Psoas muscle (tissue), 8 donors: ENCODE measurements at regions of chr7 and their contacts with region 1.

Region 1: GRCh38 chr7:159056737-159057136 is 87.9 kb downstream of the VIPR2 start:
- DNase-seq: no peak
- ATAC-seq: no peak
- H3K4me3 ChIP-seq: no peak overlapping the region
- H3K27ac ChIP-seq: no peak overlapping the region
- H3K4me1 ChIP-seq: no peaks in the 10 kb centered on the region
- H3K27me3 ChIP-seq: no peaks in the 10 kb centered on the region
- CTCF ChIP-seq: no peak

Region 2: DNA sequence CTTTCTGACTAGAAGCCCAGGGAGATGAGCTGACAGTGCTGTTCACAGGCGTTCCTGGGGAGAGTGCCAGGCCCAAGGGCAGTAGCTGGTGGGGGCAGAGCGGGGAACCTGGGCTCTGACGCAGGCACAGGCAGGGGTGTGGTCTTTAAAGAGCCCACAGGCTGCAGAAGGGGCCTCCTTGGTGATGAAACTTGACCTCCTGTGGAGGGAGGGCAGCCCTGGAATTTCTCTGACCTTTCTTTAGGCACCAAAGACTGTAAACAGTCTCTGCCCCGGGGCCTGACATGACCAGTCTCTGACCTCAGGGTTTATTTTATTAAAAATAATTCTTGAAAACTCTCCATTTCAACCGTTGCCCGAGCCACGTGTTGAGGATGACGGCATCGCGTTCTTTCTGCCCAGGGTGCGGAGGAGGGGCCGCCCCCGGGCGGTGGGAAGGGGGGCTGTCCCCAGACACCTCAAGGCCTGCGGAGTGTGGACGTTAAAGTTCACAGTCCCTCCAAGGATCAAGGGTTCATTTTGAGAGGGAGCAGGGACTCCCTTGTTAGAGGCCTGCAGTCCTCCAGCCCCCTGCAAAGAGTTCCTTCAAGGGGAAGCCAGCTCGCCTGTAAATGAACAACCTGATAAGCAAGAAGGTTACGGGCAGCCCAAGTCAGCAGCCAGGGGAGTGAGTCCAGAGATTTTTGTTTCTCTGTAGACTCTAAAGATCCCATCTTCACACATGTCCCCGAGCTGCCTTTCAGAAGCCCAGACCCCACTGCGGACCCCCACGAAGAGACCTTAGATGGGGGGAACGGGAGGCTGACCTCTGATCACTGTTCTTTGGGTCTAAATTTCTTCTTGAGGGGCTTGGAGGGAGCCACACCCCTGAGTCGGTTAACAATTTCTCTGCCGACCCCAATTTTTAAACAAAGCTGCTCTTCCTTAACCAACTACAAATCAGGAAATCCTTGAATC is 41.0 kb before region 1 on chr7:
- intact Hi-C with region 1: no loop called
- DNase-seq: peak; percentile 77 to 88
- ATAC-seq: peak; percentile 83 to 92 (median 88)
- H3K4me3 ChIP-seq: no peak overlapping the region
- H3K27ac ChIP-seq: peak overlapping the region; percentile 64
- H3K4me1 ChIP-seq: peaks cover 24% of the 10 kb centered on the region
- H3K27me3 ChIP-seq: no peaks in the 10 kb centered on the region
- CTCF ChIP-seq: no peak

Region 3: GRCh38 chr7:159126311-159127260 is 69.8 kb after region 1 on chr7:
- intact Hi-C with region 1: loop called in 1 of 2 experiments (anchors 5 kb)
- DNase-seq: peak in 1 of 2 donors; percentile 15
- ATAC-seq: no peak
- H3K4me3 ChIP-seq: no peak overlapping the region
- H3K27ac ChIP-seq: no peak overlapping the region
- H3K4me1 ChIP-seq: no peaks in the 10 kb centered on the region
- H3K27me3 ChIP-seq: no peaks in the 10 kb centered on the region
- CTCF ChIP-seq: no peak

Region 4: DNA sequence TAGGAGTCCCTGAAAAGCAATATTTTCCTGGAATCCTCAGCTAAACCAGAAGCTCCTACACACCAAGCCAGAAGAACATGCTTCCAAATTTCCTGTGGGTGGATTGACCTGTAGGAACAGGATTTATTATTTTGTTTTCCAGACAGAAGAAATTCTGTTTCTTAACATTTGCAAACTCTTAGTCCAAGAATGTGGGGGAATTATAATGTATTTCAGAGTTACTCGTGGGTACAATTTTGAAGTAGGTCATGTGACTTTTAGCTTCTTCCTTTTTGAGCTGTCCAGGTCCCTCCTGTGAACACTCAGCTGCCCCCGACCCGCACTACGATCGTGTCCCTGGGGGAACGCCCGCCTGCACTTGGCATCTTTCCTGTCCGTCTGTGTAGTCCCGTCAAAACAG is 115.7 kb after region 1 on chr7:
- intact Hi-C with region 1: no loop called
- DNase-seq: no peak
- ATAC-seq: no peak
- H3K4me3 ChIP-seq: no peak overlapping the region
- H3K27ac ChIP-seq: no peak overlapping the region
- H3K4me1 ChIP-seq: no peaks in the 10 kb centered on the region
- H3K27me3 ChIP-seq: no peaks in the 10 kb centered on the region
- CTCF ChIP-seq: no peak